ENCODE measurements at regions of chr11 and their contacts with region 1.

Region 1: DNA sequence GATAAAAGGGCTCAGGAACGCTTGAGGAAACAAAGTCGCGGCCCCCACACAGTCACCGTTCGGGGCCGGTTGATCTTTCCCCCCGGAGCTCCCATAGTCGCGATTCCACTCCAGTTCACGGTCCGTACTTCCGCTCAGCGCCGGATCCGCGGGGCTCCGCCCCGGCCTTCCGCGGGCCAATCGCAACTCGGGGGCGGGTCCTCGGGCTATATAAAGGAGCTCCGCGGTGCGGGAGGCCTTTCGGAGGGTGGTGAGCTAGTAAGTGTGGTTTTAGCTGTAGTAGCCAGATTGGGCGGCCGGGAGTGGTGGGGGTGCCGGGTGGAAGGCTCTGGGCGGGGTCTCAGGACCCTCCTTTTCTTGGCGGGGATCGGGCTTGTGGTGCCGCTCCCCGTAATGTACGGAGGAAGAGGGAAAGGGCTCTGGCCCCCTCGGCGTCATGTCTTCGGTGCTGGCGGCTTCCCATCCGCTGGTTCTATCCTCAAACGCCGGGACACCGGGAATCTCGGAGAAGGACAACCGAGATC is at the starts of genes C11orf98 and CSKMT:
- DNase-seq: peak; percentile 95
- ATAC-seq: peak; percentile 89
- H3K4me3 Mint-ChIP-seq: peak within 1 kb of the TSS; percentile 97
- H3K27ac Mint-ChIP-seq: peak within 1 kb of the TSS; percentile 88
- H3K4me1 Mint-ChIP-seq: peaks cover 45% of the 10 kb centered on the region
- H3K27me3 Mint-ChIP-seq: no peaks in the 10 kb centered on the region
- CTCF ChIP-seq: no peak
- total RNA-seq, gene C11orf98: 107 and 120 TPM in 2 replicates
- total RNA-seq, gene CSKMT: 50.5 and 52.1 TPM in 2 replicates

Region 2: GRCh38 chr11:62556108-62556871 is 108.8 kb before region 1 on chr11:
- CTCF ChIA-PET with region 1: no interaction called
- POLR2A ChIA-PET with region 1: interaction called, 16 read pairs
- intact Hi-C with region 1: no loop called
- DNase-seq: peak; percentile 64
- ATAC-seq: peak; percentile 35
- H3K4me3 Mint-ChIP-seq: peak overlapping the region; percentile 81
- H3K27ac Mint-ChIP-seq: peak overlapping the region; percentile 99
- H3K4me1 Mint-ChIP-seq: peaks cover 87% of the 10 kb centered on the region
- H3K27me3 Mint-ChIP-seq: no peaks in the 10 kb centered on the region
- CTCF ChIP-seq: no peak

Region 3: GRCh38 chr11:62612366-62613290 is 52.5 kb before region 1 on chr11 and contains the starts of genes EML3 and ROM1:
- CTCF ChIA-PET with region 1: interaction called, 4 read pairs
- POLR2A ChIA-PET with region 1: interaction called, 16 read pairs
- intact Hi-C with region 1: loop called (anchors 1 kb)
- DNase-seq: peak; percentile 95
- ATAC-seq: peak; percentile 82
- H3K4me3 Mint-ChIP-seq: peak within 1 kb of the TSS; percentile 93
- H3K27ac Mint-ChIP-seq: peak within 1 kb of the TSS; percentile 95
- H3K4me1 Mint-ChIP-seq: peaks cover 27% of the 10 kb centered on the region
- H3K27me3 Mint-ChIP-seq: no peaks in the 10 kb centered on the region
- CTCF ChIP-seq: peak; percentile 59
- total RNA-seq, gene EML3: 115 and 128 TPM in 2 replicates
- total RNA-seq, gene ROM1: 0.89 and 2.6 TPM in 2 replicates

Region 4: DNA sequence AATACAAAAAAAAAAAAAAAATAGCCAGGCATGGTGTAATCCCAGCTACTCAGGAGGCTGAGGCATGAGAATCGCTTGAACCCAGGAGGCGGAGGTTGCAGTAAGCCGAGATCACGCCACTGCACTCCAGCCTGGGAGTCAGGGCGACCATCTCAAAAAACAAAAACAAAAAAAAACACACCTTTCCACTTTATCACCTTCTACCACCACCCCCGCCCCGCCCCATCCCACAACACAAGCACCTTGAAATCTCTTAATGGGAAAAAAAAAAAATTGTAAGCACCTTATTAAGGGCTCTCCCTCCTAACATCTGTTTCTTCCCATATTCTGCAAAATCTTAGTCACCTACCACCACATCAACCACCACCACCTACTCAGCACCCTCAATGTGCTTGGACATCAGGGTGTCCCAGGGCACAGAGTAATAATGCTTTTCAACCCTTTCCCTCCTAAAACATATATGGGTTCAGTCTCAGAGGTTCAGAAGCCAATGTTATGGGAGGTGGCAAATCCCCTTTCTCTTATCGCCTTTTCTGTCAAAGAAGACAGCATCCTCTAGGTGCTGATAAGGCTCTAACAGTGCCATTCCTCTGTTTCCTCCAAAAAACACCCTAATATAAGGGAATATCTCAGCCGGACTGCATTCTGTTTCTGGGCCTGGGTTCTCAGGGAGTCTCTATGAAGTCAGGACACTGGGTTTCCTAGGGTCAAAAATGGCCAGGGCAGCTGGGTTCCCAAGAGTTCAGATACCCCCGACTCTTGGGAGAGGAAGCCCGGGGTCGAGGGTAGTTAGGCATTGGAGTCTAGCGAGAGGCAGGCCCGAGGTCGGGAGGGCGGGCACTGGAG is 12.8 kb before region 1 on chr11:
- CTCF ChIA-PET with region 1: interaction called, 7 read pairs
- POLR2A ChIA-PET with region 1: interaction called, 400 read pairs
- intact Hi-C with region 1: loop called (anchors 1 kb)
- DNase-seq: no peak
- ATAC-seq: no peak
- H3K4me3 Mint-ChIP-seq: peak overlapping the region; percentile 90
- H3K27ac Mint-ChIP-seq: peak overlapping the region; percentile 90
- H3K4me1 Mint-ChIP-seq: peaks cover 28% of the 10 kb centered on the region
- H3K27me3 Mint-ChIP-seq: no peaks in the 10 kb centered on the region
- CTCF ChIP-seq: no peak

Region 5: GRCh38 chr11:62753736-62754603 is 88.8 kb after region 1 on chr11 and contains the start of gene ZBTB3:
- CTCF ChIA-PET with region 1: no interaction called
- POLR2A ChIA-PET with region 1: interaction called, 55 read pairs
- intact Hi-C with region 1: no loop called
- DNase-seq: peak; percentile 91
- ATAC-seq: peak; percentile 93
- H3K4me3 Mint-ChIP-seq: peak within 1 kb of the TSS; percentile 97
- H3K27ac Mint-ChIP-seq: peak within 1 kb of the TSS; percentile 99
- H3K4me1 Mint-ChIP-seq: peaks cover 22% of the 10 kb centered on the region
- H3K27me3 Mint-ChIP-seq: no peaks in the 10 kb centered on the region
- CTCF ChIP-seq: no peak
- total RNA-seq, gene ZBTB3: 17.6 and 19.9 TPM in 2 replicates

Region 6: DNA sequence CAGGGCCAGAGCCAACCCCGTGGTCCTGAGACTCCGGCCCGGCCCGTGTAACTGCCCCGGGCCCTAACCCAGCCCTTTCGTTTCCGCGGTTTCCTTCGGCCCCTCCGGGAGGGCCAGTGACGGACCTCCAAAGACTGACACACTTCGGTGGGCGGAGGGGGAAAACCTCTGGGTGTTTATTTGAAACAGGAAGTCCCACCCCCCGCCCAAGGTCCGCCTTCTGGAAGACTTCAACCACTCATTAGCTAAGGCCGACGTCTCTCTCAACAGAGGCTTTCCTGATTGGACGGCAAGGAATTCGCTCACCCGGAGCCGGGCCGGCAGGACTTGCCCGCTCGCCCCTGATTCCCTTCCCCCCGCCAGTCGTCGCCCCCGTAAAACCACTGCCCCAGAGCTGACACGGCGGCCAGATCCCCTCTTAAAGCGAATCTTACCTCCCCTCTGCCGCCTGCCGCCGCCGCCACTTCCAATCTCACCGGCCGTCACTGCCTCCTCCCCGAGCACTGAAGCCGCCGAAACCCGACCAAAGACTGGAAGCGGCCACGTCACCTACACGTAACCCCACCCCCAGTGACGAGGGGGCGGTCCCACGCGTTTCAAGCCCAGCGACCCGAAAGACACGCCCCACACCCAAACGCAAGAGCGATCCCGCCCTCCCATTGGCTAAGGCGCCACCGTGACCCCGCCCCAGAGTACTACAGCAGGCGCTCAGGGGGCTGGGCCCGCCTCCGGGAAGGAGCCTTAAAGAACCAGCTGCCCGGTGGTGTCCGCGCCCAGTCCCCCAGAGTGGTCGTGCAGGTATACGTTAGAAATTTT is 166.6 kb after region 1 on chr11 and contains the start of gene STX5:
- CTCF ChIA-PET with region 1: no interaction called
- POLR2A ChIA-PET with region 1: interaction called, 17 read pairs
- intact Hi-C with region 1: no loop called
- DNase-seq: peak; percentile 98
- ATAC-seq: peak; percentile 91
- H3K4me3 Mint-ChIP-seq: peak within 1 kb of the TSS; percentile 100
- H3K27ac Mint-ChIP-seq: peak within 1 kb of the TSS; percentile 100
- H3K4me1 Mint-ChIP-seq: peaks cover 47% of the 10 kb centered on the region
- H3K27me3 Mint-ChIP-seq: no peaks in the 10 kb centered on the region
- CTCF ChIP-seq: no peak
- total RNA-seq, gene STX5: 58.4 and 71.5 TPM in 2 replicates

Region 7: DNA sequence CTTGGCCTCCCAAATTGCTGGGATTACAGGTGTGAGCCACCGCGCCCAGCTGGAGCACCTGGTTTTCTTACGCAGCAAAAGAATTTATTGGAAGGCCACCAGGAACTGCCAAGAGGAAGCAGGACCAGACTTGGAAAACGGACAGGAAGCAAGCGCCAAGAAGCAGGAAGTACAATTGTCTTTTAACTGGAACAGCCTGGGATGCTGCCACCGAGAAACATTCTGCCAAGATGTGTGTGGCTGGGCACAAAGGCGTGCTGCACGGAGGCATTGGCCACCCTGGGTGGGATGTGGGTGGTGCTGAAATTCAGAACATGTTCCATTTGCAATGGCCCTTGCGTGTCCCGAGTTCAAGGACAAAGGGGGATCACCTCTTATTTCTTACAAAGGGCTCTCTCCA is 230.9 kb after region 1 on chr11:
- CTCF ChIA-PET with region 1: no interaction called
- POLR2A ChIA-PET with region 1: no interaction called
- intact Hi-C with region 1: no loop called
- DNase-seq: no peak
- ATAC-seq: no peak
- H3K4me3 Mint-ChIP-seq: no peak overlapping the region
- H3K27ac Mint-ChIP-seq: no peak overlapping the region
- H3K4me1 Mint-ChIP-seq: no peaks in the 10 kb centered on the region
- H3K27me3 Mint-ChIP-seq: peaks cover 11% of the 10 kb centered on the region
- CTCF ChIP-seq: no peak